ENCODE measurements at regions of chr3 and their contacts with region 1.

Region 1: DNA sequence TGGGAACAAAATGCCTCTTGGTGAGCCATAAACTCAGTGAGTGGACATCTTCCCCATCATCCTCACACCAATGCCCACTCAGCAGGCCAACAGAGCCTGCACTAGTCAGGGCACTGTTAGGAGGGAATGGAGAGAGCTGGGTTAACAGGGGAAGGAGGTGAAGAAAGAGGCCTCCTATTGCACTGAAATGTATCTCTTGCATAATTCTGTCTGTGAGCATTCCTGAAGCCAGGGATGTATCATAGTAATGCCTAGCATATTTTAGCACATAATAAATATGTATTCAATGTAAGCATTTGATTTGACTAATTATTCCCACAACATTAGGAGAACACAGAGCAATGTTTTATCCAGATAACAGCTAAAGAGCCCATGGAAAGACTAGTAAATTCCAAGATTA is 81.2 kb downstream of the ANO10 start:
- DNase-seq: no peak
- H3K4me3 Mint-ChIP-seq: no peak overlapping the region
- H3K27ac Mint-ChIP-seq: no peak overlapping the region
- H3K4me1 Mint-ChIP-seq: no peaks in the 10 kb centered on the region
- H3K27me3 Mint-ChIP-seq: no peaks in the 10 kb centered on the region
- CTCF ChIP-seq: no peak

Region 2: GRCh38 chr3:43489930-43490329 is 50.7 kb before region 1 on chr3:
- CTCF ChIA-PET with region 1: no interaction called
- intact Hi-C with region 1: no loop called
- DNase-seq: no peak
- H3K4me3 Mint-ChIP-seq: no peak overlapping the region
- H3K27ac Mint-ChIP-seq: no peak overlapping the region
- H3K4me1 Mint-ChIP-seq: peaks cover 13% of the 10 kb centered on the region
- H3K27me3 Mint-ChIP-seq: no peaks in the 10 kb centered on the region
- CTCF ChIP-seq: no peak

Region 3: DNA sequence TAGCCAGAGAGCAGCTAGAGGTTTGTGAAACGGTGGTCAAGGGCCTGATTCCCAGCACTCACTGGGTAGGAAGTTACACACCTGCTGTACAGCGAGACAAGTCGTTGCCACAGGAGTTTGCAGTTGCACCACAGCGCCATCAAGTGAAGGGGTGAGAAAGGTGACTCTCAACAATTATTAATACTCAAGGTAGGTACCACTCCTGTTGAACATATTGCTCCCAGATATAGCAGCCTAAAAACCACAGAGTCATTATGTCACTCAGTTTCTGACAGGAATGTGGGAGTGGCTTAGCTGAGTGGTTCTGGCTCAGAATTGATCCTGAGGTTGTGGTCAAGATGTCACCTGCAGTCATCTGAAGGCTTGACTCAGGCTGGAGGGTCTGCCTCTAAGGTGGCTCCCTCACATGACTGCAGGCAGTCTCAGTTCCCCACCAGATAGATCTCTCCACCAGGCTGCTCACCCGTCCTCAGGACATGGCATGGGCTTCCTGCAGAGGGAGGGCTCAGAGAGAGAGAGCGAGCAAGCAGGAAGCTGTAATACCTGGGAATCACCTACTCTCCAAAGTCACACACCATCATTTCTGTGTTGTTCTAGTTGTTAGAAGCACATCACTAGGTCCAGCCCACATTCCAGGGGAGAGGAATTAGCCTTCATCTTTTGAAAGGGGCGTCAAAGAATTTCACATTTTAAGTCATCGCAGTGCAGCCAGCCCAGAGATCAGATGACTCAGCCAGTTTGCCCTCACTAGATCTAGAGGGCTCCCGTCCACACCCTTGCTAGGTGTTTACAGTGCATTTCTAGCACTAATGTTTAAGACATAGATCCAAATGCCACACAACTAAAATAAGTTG is 98.2 kb after region 1 on chr3:
- CTCF ChIA-PET with region 1: no interaction called
- intact Hi-C with region 1: loop called (anchors 1 kb)
- DNase-seq: peak; percentile 79
- H3K4me3 Mint-ChIP-seq: peak overlapping the region; percentile 55
- H3K27ac Mint-ChIP-seq: peak overlapping the region; percentile 69
- H3K4me1 Mint-ChIP-seq: peaks cover 8% of the 10 kb centered on the region
- H3K27me3 Mint-ChIP-seq: no peaks in the 10 kb centered on the region
- CTCF ChIP-seq: peak; percentile 49

Region 4: DNA sequence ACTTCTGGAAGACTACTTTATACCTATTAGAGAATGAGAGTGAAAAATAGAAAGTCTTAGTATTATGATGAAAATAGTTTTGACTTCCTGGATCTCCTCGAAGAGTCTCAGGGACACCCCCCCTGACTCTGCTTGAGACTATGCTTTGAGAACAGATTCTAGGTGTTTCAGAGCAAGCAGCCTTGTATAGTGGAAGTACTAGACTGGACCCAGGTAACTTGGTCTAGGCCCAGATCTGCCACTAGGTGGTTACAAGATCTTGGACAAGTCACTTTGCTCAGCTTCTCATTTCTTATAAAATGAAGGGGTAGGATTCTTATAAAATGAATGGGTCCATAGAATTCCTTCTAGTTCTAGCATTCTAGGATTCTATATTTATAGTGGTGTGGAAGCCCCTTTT is 159.2 kb after region 1 on chr3:
- CTCF ChIA-PET with region 1: no interaction called
- intact Hi-C with region 1: loop called (anchors 5 kb)
- DNase-seq: peak; percentile 26
- H3K4me3 Mint-ChIP-seq: no peak overlapping the region
- H3K27ac Mint-ChIP-seq: no peak overlapping the region
- H3K4me1 Mint-ChIP-seq: peaks cover 30% of the 10 kb centered on the region
- H3K27me3 Mint-ChIP-seq: no peaks in the 10 kb centered on the region
- CTCF ChIP-seq: peak; percentile 23

Region 5: DNA sequence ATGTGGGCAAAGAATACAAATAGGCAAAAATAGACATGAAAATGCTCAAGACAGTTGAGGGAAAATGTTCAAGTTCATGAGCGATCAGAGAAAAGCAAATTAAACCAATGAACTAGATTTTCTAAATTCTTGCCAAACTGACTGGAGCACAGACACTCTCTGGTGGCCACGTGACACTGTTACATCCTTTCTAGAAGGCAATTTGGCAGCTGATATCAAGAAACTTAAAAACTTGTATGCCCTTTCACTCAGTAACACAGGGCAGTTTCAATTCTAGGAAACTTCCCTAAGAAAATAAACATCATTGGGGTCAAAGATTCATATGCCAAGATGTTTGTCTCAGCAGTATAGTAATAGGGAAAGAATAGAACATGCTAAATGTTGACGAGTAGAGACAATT is 202.3 kb after region 1 on chr3:
- CTCF ChIA-PET with region 1: no interaction called
- intact Hi-C with region 1: loop called (anchors 5 kb)
- DNase-seq: no peak
- H3K4me3 Mint-ChIP-seq: no peak overlapping the region
- H3K27ac Mint-ChIP-seq: no peak overlapping the region
- H3K4me1 Mint-ChIP-seq: no peaks in the 10 kb centered on the region
- H3K27me3 Mint-ChIP-seq: no peaks in the 10 kb centered on the region
- CTCF ChIP-seq: no peak